Posterior vena cava (tissue), 2 donors: ENCODE measurements at regions of chr21 and their contacts with region 1.

Region 1: GRCh38 chr21:34582506-34583150 is 32.3 kb downstream of the RCAN1 start:
- DNase-seq: no peak

Region 2: DNA sequence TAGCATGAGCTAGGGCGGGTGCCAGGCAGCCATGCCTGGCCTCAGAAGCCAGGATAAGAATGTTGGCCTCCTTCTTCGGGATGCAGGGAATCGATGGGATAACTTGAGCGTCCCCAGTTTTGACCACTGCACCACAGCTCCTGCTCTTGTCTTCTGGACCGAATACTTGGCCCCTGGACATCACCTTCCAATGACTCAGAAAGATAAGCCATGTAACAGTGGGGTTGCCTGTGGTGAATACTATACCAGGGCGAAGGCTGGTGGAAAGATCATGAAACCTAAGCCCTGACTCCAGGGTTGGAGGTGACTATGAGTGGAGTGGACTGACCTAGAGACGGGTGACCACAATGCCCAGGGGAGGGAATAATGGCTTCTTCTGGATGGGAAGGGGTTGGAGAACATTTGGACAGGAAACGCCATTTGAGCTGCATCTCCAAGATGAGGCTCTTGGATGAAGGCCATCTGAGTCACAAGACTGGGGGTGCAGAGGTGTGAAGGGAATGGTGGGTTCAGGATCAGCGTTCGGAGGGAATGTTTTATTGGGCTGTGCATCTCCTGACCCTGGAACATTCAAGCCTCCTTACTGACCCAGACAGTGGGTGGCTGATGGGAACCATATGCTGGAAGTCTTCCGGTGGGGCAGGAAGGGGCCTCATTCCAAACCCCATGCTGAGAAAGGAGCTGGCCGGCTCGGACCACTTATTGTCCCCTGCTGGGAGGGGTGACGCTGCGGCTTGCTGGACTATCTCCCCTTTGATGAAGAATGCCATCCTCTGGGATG is 237.3 kb before region 1 on chr21:
- intact Hi-C with region 1: no loop called
- DNase-seq: no peak

Region 3: GRCh38 chr21:34526618-34527290 is 55.9 kb before region 1 on chr21:
- intact Hi-C with region 1: loop called in 1 of 2 experiments (anchors 5 kb)
- DNase-seq: peak; percentile 91